Dorsolateral prefrontal cortex (tissue), 120 donors: ENCODE measurements at regions of chr11 and their contacts with region 1.

Region 1: DNA sequence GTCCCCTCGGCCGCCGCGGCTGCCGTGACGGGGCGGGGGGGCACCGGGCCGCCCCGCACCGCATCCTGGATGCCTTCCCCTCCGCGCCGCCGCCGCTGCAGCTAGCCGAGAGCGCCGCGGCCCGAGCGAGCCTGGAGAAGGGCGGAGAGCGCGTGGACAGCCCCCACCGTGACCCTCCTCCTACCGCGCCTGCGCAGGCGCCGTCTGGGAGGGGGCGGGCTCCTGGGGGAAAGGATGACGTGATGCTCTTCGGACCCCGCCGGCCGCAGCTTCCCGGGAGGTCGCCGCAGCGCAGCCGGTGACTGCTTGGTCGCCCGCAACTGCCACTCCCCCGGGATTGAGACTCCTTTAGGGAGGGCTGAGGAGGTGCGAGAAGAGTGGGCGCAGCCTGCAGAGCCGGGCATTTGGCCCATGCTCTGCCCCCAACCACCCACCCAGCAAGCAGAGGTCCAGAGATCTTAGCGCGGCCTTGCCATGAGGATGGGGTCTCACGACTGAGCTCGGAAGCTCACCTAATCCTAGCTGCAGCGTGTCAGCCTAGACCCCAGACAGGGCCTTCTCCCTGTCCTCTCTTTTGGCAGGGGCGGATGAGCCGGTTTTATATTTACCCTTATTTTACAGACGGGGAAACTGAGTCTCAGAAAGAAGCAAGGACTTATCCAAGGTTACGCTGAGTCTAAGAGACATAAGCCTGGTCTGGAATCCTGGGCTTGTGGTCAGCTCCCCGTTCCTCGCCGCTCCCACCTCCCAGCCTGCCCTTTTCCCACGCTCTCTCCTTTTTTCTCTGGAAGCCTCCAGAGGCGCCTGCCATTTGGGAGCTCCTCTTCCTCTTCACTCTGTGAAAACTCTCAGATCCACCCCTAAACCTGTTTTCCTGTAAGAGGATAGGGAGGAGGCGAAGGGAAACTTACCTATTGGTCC is at the start of gene DENND5A:
- DNase-seq: peak; percentile 76 to 92 (median 85)
- H3K4me3 ChIP-seq: peak within 1 kb of the TSS; percentile 67 to 100 (median 92)
- H3K27ac ChIP-seq: peak within 1 kb of the TSS; percentile 73 to 98 (median 96)
- H3K27me3 ChIP-seq: no peaks in the 10 kb centered on the region
- CTCF ChIP-seq: peak in 38 of 56 donors; percentile 3 to 61 (median 40)
- total RNA-seq, gene DENND5A: 128 to 331 (median 174) TPM

Region 2: GRCh38 chr11:9015677-9016076 is 249.8 kb before region 1 on chr11:
- intact Hi-C with region 1: loop called in 1 of 2 experiments (anchors 10 kb)
- DNase-seq: peak in 9 of 10 donors; percentile 55 to 95 (median 67)
- H3K4me3 ChIP-seq: no peak overlapping the region
- H3K27ac ChIP-seq: peak overlapping the region in 1 of 59 donors; percentile 51
- H3K27me3 ChIP-seq: no peaks in the 10 kb centered on the region
- CTCF ChIP-seq: peak in 55 of 56 donors; percentile 59 to 87 (median 77)

Region 3: GRCh38 chr11:9150501-9150900 is 115.0 kb before region 1 on chr11:
- intact Hi-C with region 1: no loop called
- DNase-seq: no peak
- H3K4me3 ChIP-seq: no peak overlapping the region
- H3K27ac ChIP-seq: peak overlapping the region in 2 of 59 donors; percentile 11 to 44
- H3K27me3 ChIP-seq: no peaks in the 10 kb centered on the region
- CTCF ChIP-seq: no peak

Region 4: DNA sequence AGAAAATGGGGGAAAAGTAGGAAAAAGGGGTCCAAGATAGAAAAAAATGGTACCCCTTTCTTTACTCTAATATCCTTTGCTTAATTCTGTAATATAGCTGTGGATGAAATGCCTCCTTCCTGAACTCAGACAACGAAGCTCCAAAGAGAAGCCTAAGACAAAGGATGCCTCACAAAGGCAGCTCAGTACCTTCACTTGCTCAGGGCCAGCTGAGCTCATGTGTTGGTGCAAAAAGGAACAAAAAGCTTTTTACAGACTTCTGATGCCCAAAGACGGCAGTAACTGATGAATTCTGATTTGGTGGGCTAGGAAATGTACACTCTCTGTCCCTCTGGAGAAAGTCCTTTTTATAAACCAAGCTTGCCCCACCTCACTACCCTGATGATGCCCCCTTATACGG is 77.9 kb before region 1 on chr11:
- intact Hi-C with region 1: loop called in 1 of 2 experiments (anchors 5 kb)
- DNase-seq: no peak
- H3K4me3 ChIP-seq: peak overlapping the region in 6 of 59 donors; percentile 3 to 33 (median 12)
- H3K27ac ChIP-seq: peak overlapping the region; percentile 41 to 97 (median 87)
- H3K27me3 ChIP-seq: no peaks in the 10 kb centered on the region
- CTCF ChIP-seq: peak in 1 of 56 donors; percentile 11

Region 5: DNA sequence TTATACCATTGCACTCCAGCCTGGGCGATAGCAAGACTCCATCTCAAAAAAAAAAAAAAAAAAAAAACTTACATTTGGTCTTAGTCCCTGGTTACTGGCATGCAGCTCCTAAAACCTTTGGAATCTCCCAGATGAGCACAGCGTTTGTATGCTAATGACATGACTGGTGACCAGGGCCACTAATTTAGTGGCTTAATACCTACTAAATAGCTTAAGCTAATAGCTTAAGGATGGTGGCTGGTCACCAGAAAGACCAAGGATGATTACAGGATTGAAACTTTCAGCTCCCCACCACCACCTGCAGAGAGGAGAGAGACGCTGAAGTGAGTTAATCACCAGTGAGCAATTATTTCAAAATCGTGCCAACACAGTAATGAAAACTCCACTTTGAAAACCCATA is 37.4 kb before region 1 on chr11:
- intact Hi-C with region 1: loop called in 1 of 2 experiments (anchors 5 kb)
- DNase-seq: no peak
- H3K4me3 ChIP-seq: no peak overlapping the region
- H3K27ac ChIP-seq: peak overlapping the region in 55 of 59 donors; percentile 50 to 99 (median 97)
- H3K27me3 ChIP-seq: no peaks in the 10 kb centered on the region
- CTCF ChIP-seq: no peak

Region 6: DNA sequence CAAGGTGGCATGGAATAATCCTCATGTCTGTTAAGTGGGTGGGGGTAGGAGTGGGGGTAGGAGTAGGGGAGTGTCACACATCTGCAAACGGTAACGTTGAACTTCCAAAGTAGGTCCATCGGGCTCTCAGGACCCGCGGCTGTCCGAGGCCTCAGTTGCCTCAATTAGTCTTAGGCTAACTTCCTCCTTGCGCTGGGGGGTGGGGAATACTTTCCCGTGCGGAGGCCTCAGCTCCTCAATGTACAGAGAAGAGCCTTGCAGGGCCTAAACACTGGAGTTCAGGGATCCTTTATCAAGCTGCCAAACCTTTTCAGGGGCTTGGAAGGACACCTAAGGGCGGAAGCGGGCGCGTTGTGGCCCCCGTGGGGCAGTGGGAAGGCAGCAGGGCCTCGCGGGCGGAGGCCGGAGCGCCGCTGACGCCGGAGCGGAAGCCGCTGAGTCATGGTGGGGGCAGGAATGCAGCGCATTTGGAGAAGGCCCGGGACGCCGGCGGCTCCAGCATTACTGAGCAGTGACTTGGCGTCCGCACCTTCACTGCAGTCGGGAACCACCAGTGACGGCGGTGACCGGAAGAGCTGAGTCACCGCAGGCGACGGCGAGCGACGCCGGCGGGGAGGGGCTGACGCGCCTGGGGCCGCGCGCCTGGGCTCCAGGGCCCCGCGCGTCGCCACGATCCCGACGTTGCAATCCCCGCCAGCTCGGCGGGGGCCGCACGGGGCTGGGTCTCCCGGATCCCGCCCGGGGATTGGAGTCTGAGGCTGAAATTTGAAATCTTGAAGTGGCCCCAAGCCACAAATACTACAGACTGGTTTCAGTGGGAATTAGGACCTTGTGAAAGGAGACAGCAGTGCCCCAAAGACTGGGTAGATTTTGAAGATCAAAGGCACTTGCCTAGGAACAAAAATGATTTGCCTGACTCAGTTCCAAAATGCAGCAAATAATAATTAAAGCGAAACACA is 98.8 kb after region 1 on chr11:
- intact Hi-C with region 1: loop called in 1 of 2 experiments (anchors 1 kb)
- DNase-seq: peak; percentile 77 to 97 (median 91)
- H3K4me3 ChIP-seq: peak overlapping the region; percentile 49 to 84 (median 70)
- H3K27ac ChIP-seq: peak overlapping the region; percentile 87 to 100 (median 98)
- H3K27me3 ChIP-seq: no peaks in the 10 kb centered on the region
- CTCF ChIP-seq: peak in 24 of 56 donors; percentile 5 to 51 (median 26)